ENCODE measurements at regions of chr3 and their contacts with region 1.

Region 1: DNA sequence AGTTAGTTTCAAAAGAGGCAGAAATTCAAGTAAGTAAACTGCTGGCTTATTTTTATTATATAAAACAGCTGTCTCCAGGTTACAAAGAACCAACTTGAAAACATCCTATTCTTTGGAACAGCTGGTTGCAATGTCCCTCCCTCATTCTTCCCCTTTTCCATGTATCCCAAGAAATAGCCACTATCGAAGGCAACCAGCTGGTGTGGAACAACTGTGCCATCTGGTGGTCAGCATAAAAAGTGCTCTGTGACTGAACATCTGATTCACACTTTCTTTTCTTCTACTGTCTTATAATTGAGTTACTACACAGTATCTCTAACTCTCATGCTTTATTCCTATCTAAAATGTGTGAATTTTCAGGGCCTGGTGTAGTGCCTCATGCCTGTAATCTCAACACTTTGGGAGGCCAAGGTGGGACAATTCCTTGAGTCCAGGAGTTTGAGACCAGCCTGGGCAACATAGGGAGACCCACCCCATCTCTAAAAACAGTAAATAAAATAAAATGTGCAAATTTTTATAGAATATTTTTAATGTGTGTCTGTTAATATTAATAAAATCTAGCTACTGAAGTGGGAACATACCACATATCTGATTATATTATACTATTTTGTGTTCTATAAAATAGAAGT is 9.6 kb downstream of the OSBPL11 start:
- DNase-seq: peak; percentile 82
- ATAC-seq: peak; percentile 93
- H3K4me3 ChIP-seq: no peak overlapping the region
- H3K27ac ChIP-seq: no peak overlapping the region
- H3K4me1 ChIP-seq: no peaks in the 10 kb centered on the region
- H3K27me3 ChIP-seq: no peaks in the 10 kb centered on the region
- CTCF ChIP-seq: peak; percentile 93
- POLR2A ChIP-seq: peak; percentile 53; the same call in 1 of the 2 replicates
- RAD21 ChIP-seq: peak; percentile 96

Region 2: GRCh38 chr3:124761250-124761796 is 824.4 kb before region 1 on chr3:
- CTCF ChIA-PET with region 1: interaction called, 5 read pairs
- POLR2A ChIA-PET with region 1: no interaction called
- dilution Hi-C with region 1: no loop called
- in situ Hi-C with region 1: no loop called
- intact Hi-C with region 1: loop called (anchors 5 kb)
- DNase-seq: peak; percentile 89
- ATAC-seq: peak; percentile 85
- H3K4me3 ChIP-seq: no peak overlapping the region
- H3K27ac ChIP-seq: no peak overlapping the region
- H3K4me1 ChIP-seq: peaks cover 7% of the 10 kb centered on the region
- H3K27me3 ChIP-seq: no peaks in the 10 kb centered on the region
- CTCF ChIP-seq: peak; percentile 96
- POLR2A ChIP-seq: peak; percentile 39; the same call in 1 of the 2 replicates
- RAD21 ChIP-seq: peak; percentile 98

Region 3: DNA sequence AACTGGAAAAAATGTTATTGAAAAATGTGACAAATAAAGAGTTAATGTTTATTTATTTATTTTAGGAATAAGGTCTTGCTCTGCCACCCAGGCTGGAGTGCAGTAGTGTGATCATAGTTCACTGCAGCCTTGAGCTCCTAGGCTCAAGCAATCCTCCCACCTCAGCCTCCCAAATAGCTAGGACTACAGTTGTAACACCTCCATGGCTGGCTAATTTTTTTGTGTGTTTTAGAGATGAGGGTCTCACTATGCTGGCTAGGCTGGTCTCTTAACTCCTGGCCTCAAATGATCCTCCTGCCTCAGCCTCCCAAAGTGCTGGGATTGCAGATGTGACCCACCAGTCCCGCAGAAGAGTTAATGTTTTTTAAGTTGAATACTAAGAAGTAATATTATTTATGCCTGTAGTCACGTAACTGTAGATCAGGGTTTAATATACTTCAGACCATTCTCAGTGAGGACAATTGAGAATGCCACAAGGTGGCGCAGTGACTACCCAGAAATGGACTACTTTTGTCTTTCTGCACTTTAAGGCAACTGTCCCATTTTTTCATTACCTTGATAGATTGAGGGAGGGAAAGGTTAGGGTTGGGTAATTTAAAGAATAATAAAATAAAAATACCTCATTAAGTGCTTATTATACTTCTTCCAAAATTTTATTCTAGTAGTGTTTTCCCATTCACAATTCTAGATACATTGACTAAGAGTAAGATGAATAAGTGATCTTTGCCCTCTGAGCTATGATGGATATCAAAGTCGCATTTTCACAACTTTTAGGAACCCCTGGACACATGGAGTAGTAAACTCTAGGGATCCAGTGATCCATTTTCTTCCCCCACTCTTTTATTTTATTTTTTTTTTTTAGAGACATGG is 657.1 kb before region 1 on chr3:
- CTCF ChIA-PET with region 1: interaction called, 6 read pairs
- POLR2A ChIA-PET with region 1: no interaction called
- dilution Hi-C with region 1: no loop called
- in situ Hi-C with region 1: loop called (anchors 10 kb)
- intact Hi-C with region 1: loop called (anchors 2 kb)
- DNase-seq: peak; percentile 74
- ATAC-seq: peak; percentile 80
- H3K4me3 ChIP-seq: no peak overlapping the region
- H3K27ac ChIP-seq: no peak overlapping the region
- H3K4me1 ChIP-seq: peaks cover 2% of the 10 kb centered on the region; the same call in 1 of the 2 replicates
- H3K27me3 ChIP-seq: peaks cover 13% of the 10 kb centered on the region
- CTCF ChIP-seq: peak; percentile 79
- POLR2A ChIP-seq: no peak
- RAD21 ChIP-seq: peak; percentile 78

Region 4: DNA sequence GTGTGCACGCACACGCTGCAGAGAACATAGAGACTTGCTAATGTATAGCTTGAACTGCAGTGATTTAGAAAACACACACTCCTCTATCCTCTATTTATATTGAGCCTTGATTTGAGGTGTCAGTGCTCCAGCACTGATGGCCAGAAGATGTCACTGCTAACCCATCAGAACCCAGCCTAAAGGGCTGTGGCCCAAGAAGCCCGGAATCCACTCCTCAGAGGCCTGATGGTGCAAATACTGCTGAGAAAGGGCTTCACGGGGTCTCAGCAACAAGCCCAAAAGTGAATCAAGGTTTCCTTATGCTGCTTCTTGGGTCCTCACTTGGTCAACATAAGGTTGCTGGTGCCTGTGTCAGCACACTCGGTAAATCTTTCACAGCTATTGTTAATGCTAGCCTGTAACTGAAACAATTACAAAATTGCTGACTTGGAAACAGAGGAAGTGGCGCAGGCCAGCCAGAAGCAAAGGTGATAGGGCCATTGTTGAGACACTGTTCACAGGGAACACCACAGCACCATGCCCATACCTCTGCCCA is 590.2 kb before region 1 on chr3:
- CTCF ChIA-PET with region 1: interaction called, 4 read pairs
- POLR2A ChIA-PET with region 1: no interaction called
- dilution Hi-C with region 1: no loop called
- in situ Hi-C with region 1: loop called (anchors 25 kb)
- intact Hi-C with region 1: no loop called
- DNase-seq: peak; percentile 48
- ATAC-seq: peak; percentile 67
- H3K4me3 ChIP-seq: no peak overlapping the region
- H3K27ac ChIP-seq: no peak overlapping the region
- H3K4me1 ChIP-seq: peaks cover 4% of the 10 kb centered on the region; the same call in 1 of the 2 replicates
- H3K27me3 ChIP-seq: no peaks in the 10 kb centered on the region
- CTCF ChIP-seq: peak; percentile 45
- POLR2A ChIP-seq: no peak
- RAD21 ChIP-seq: peak; percentile 68

Region 5: DNA sequence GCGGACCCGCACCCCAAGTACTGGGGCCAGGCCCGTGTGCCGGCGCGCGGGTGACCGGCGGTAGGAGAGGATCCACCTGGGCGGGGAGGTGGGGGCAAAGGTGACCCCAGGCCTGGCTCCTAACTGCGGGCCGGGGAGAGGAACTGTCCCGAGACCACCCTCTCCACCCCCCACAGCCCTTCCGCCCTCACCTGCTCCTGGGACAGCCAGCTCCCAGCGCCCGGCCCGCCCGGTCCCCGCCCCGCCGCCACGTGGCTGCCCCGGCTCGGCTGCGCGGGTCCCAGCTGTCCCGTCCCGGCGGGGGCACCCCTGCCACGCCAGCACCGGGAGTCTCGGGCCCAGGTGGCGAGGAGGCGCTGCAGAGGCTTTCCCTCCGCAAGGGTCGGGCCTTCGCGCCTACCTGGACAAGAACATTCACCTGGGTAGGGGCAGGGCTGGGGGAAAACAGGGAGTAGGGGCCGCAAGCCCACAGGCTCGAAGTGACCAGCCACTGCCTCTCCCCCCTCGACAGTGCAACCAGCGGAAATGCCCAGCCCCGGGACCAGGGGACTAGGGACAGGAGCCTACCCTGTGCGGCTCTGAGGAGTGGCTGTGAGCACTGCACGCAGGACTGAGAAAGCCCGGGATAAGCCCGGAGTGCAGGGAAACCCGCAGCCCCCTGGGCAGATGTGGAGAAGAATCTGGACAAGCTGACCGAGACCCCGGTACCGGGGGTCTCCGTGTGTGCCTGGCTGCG is 373.0 kb before region 1 on chr3 and contains the start of gene SLC12A8:
- CTCF ChIA-PET with region 1: no interaction called
- POLR2A ChIA-PET with region 1: no interaction called
- dilution Hi-C with region 1: no loop called
- in situ Hi-C with region 1: no loop called
- intact Hi-C with region 1: loop called (anchors 10 kb)
- DNase-seq: no peak
- ATAC-seq: peak; percentile 55
- H3K4me3 ChIP-seq: peak within 1 kb of the TSS; percentile 13
- H3K27ac ChIP-seq: no peak within 1 kb of the TSS
- H3K4me1 ChIP-seq: peaks cover 3% of the 10 kb centered on the region; the same call in 1 of the 2 replicates
- H3K27me3 ChIP-seq: peaks cover 26% of the 10 kb centered on the region
- CTCF ChIP-seq: no peak
- POLR2A ChIP-seq: no peak
- RAD21 ChIP-seq: no peak
- total RNA-seq, gene SLC12A8: 1.9 and 2.2 TPM in 2 replicates

Region 6: DNA sequence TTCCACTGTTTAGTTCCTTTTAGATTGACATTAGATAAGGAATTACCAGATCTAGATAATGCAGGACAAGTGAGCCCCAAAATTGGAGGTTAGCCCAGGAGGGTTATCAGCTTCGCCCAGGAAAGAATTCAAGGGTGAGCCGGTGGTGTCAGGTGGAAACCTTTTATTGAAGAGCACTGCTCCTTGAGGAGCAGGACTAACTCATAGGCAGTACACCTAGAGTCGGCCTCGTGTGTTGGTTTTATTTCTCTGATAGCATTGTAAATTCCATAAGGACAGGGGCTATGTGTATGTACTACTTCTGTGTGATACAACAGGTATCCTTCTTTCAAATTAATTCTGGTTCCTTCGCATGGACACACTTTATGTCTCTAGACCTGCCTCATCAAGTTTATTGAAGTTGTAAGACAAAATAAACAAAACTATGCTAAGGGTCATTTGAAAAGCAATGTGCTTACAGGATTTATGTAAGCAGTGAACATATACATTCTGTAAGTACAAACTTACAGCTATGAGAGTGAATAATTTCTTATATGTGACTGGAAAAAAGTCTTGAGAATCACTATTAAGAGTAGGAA is 122.9 kb before region 1 on chr3:
- CTCF ChIA-PET with region 1: no interaction called
- POLR2A ChIA-PET with region 1: no interaction called
- dilution Hi-C with region 1: no loop called
- in situ Hi-C with region 1: no loop called
- intact Hi-C with region 1: loop called (anchors 10 kb)
- DNase-seq: no peak
- ATAC-seq: no peak; the same call in 1 of the 2 replicates
- H3K4me3 ChIP-seq: no peak overlapping the region
- H3K27ac ChIP-seq: no peak overlapping the region
- H3K4me1 ChIP-seq: peaks cover 4% of the 10 kb centered on the region; the same call in 1 of the 2 replicates
- H3K27me3 ChIP-seq: no peaks in the 10 kb centered on the region
- CTCF ChIP-seq: no peak
- POLR2A ChIP-seq: no peak
- RAD21 ChIP-seq: no peak

Region 7: DNA sequence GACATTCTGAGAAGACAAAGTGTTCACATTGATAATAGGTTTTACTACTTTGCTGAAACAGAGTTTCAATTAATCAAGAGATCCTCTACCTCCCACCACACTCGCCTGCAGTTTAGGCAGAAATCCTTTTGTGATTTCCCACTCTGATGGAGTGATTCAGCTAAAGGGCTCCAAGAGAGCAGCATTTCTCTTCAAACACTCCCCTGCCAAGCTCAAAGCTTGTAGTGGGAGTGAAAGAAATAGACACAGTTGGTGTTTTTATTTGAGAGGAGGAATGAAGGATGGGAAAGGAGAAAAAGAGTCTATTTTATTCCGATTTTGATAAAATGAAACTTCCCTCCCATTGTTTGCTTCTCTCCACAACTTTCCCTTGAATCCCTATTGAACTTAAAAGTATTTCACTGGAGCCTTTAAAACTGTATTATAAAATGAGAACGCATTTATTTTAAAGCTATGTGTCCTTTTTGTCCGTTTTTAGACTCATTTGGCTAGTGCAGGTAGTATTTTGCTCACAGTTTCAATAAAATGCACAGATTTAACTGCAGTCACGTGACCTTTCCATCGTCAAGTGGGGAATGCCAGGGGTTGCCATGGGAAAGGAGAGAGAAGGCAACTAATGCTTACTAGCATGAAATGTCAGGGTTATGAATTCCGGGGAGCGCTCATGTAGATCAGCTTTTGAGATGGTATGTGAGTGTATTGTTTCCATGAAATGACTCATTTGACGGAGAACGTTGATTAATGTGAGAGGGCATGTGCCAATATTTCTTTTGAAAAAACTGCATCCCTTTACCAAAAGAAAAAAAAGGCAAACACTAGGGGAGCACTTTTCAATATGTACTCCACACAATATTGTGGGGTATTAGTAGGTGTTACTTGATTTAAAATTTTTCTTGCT is 17.3 kb after region 1 on chr3:
- CTCF ChIA-PET with region 1: no interaction called
- POLR2A ChIA-PET with region 1: no interaction called
- dilution Hi-C with region 1: no loop called
- in situ Hi-C with region 1: no loop called
- intact Hi-C with region 1: no loop called
- DNase-seq: peak; percentile 24
- ATAC-seq: no peak
- H3K4me3 ChIP-seq: no peak overlapping the region
- H3K27ac ChIP-seq: no peak overlapping the region
- H3K4me1 ChIP-seq: no peaks in the 10 kb centered on the region
- H3K27me3 ChIP-seq: no peaks in the 10 kb centered on the region
- CTCF ChIP-seq: no peak
- POLR2A ChIP-seq: no peak
- RAD21 ChIP-seq: no peak

Region 8: DNA sequence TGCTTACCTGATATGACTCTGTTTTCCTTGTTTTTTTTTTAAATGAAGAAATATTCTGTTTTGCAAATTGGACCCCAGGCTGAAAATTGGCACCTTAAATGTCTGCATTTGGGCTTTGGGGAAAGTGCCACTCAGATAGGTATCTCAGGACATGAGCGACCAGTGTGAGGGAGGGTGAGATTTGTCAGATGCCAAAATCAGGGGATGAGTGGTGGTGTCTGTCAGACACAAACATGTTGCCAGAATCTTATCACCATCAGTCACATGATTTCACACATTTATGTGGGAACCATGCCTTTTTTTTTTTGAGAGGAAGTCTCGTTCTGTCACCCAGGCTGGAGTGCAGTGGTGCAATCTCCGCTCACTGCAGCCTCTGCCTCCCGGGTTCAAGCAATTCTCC is 85.2 kb after region 1 on chr3:
- CTCF ChIA-PET with region 1: no interaction called
- POLR2A ChIA-PET with region 1: no interaction called
- dilution Hi-C with region 1: no loop called
- in situ Hi-C with region 1: no loop called
- intact Hi-C with region 1: no loop called
- DNase-seq: no peak
- ATAC-seq: no peak
- H3K4me3 ChIP-seq: no peak overlapping the region
- H3K27ac ChIP-seq: no peak overlapping the region
- H3K4me1 ChIP-seq: no peaks in the 10 kb centered on the region
- H3K27me3 ChIP-seq: peaks cover 4% of the 10 kb centered on the region
- CTCF ChIP-seq: no peak
- POLR2A ChIP-seq: no peak
- RAD21 ChIP-seq: no peak

Region 9: DNA sequence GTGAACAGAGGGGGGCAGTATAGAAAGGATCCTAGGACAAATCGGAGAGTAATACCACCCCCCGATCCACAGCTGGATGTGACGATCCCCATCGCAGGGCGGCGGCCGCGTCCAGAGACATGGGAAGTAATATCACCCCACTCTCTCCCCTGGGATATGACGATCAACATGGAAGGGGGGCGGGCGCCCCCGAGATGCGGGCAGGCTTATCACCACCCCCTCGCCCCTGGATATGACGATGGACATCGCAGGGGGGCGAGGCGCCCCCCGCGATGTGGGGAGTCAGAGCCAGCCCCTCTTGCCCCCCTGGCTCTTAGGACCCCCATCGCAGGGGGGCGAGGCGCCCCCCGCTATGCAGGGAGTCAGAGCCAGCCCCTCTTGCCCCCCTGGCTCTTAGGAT is 129.9 kb after region 1 on chr3:
- CTCF ChIA-PET with region 1: no interaction called
- POLR2A ChIA-PET with region 1: no interaction called
- dilution Hi-C with region 1: no loop called
- in situ Hi-C with region 1: no loop called
- intact Hi-C with region 1: no loop called
- DNase-seq: no peak
- ATAC-seq: no peak
- H3K4me3 ChIP-seq: no peak overlapping the region
- H3K27ac ChIP-seq: no peak overlapping the region
- H3K4me1 ChIP-seq: no peaks in the 10 kb centered on the region
- H3K27me3 ChIP-seq: no peaks in the 10 kb centered on the region
- CTCF ChIP-seq: no peak
- POLR2A ChIP-seq: no peak
- RAD21 ChIP-seq: no peak